Caco-2 (cell line): ENCODE measurements at regions of chr10 and their contacts with region 1.

Region 1: DNA sequence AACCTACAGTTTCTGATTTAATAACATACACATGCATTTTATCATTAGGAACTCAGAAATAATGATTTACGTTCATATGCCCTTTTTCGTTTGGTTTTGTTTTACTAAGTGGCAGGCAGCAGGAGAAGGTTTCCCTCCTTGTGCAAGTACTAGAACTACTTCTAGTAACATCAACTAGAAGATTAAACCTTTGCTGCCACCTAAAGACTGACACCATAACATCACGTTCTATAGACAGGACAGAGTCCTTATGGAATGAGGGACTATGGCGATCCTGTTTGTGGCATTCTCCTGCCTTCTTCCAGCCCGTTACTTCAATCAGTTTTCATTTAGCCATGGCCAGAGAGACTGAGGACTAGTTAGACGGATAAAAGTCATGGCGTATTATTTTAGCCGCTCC is 53.2 kb downstream of the GAD2 start:
- DNase-seq: peak in 1 of 2 experiments; percentile 65
- H3K4me3 ChIP-seq: no peak overlapping the region
- H3K4me3 Mint-ChIP-seq: no peak overlapping the region
- H3K27ac Mint-ChIP-seq: no peak overlapping the region
- H3K4me1 ChIP-seq: no peaks in the 10 kb centered on the region
- H3K4me1 Mint-ChIP-seq: peaks cover 6% of the 10 kb centered on the region
- H3K27me3 ChIP-seq: no peaks in the 10 kb centered on the region
- H3K27me3 Mint-ChIP-seq: peaks cover 8% of the 10 kb centered on the region
- CTCF ChIP-seq: peak; percentile 51 to 58

Region 2: DNA sequence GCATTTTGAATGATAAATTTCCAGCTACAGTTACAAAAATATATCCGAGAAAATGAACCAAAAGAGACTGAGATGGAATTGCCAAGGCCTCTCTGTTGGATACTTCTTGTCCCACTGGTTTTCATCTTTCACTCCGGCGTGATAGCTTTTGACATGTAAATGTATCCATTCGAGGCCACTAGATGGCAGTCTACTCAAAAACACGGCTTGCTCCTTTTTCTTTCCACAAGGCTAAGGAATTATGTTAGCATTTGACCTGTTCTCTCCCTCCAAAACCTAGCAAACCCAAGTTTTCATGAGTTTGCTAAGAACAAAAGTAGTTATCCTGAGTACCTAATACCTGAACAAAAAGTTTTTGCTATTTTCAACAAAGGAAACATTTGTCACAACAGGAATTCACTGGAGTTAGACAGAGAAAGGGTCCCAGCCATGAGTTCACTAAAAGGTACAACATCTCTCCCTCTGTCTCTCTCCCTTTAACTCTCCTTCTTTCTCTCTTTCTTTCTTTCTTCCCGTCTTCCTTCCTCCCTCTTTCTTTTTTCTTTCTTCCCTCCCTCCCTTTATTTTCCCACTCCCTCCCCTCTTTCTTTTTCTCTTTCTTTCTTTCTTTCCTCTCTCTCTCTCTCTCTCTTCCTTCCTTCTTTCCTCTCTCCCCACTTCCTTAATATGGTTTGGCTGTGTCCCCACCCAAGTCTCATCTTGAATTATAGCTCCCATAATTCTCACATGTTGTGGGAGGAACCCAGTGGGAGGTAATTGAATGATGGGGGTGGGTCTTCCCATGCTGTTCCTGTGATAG is 543.6 kb before region 1 on chr10:
- CTCF ChIA-PET with region 1: interaction called, 5 read pairs
- POLR2A ChIA-PET with region 1: no interaction called
- intact Hi-C with region 1: loop called (anchors 1 kb)
- DNase-seq: peak; percentile 51 to 62
- H3K4me3 ChIP-seq: no peak overlapping the region
- H3K4me3 Mint-ChIP-seq: no peak overlapping the region
- H3K27ac Mint-ChIP-seq: no peak overlapping the region
- H3K4me1 ChIP-seq: no peaks in the 10 kb centered on the region
- H3K4me1 Mint-ChIP-seq: no peaks in the 10 kb centered on the region
- H3K27me3 ChIP-seq: no peaks in the 10 kb centered on the region
- H3K27me3 Mint-ChIP-seq: peaks cover 5% of the 10 kb centered on the region
- CTCF ChIP-seq: peak; percentile 78

Region 3: DNA sequence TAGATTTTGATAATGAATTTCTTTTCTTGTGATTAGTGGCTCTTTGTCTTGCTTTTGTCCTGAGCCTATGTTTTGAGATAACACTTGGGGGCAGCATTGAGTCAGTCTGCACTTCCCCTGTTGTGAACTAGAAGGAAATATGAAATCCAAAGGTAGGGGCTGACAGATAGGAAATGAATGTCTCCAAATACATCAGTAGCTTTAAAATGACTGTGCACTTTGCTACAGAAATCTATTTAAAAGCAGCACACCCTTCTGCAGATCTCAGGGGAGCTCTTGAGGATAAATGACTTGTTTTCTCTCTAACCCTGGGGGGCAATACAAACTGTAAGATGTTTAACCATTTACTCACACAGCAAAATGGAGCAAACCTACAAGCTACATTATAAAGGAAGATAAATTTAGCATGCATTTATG is 511.7 kb before region 1 on chr10:
- CTCF ChIA-PET with region 1: no interaction called
- POLR2A ChIA-PET with region 1: no interaction called
- intact Hi-C with region 1: loop called (anchors 1 kb)
- DNase-seq: peak; percentile 42 to 52
- H3K4me3 ChIP-seq: no peak overlapping the region
- H3K4me3 Mint-ChIP-seq: no peak overlapping the region
- H3K27ac Mint-ChIP-seq: no peak overlapping the region
- H3K4me1 ChIP-seq: no peaks in the 10 kb centered on the region
- H3K4me1 Mint-ChIP-seq: no peaks in the 10 kb centered on the region
- H3K27me3 ChIP-seq: no peaks in the 10 kb centered on the region
- H3K27me3 Mint-ChIP-seq: peaks cover 2% of the 10 kb centered on the region
- CTCF ChIP-seq: peak; percentile 65 to 72

Region 4: DNA sequence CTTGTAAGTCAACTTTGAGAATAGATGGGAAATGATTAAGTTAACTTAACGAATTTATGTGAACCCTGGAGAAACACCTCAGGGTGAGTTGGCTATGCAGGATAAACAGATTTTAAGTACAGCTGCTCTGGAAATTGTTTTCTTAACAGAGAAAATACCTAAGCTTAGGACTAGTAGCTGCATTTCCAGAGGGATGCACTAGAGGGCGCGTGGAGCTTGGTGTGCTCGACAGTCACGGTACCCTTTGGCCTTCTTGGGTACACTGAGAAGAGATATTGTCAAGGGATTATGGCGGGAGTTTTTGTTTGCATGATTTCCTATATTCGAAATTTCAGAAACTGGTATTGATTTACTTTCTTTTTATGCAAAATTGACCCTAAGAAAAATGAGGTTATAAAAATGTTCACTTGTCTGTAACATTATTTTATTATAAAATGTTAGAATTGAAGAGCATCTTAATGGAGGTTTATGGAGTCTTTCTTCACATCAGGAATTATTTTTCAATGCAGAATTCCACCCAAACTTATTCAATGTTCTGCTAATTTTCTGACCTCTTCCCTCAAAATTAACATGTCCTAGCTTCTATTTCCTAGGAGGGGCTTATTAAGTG is 394.1 kb before region 1 on chr10:
- CTCF ChIA-PET with region 1: interaction called, 24 read pairs
- POLR2A ChIA-PET with region 1: no interaction called
- intact Hi-C with region 1: loop called (anchors 1 kb)
- DNase-seq: peak; percentile 79 to 83
- H3K4me3 ChIP-seq: no peak overlapping the region
- H3K4me3 Mint-ChIP-seq: no peak overlapping the region
- H3K27ac Mint-ChIP-seq: no peak overlapping the region
- H3K4me1 ChIP-seq: no peaks in the 10 kb centered on the region
- H3K4me1 Mint-ChIP-seq: no peaks in the 10 kb centered on the region
- H3K27me3 ChIP-seq: no peaks in the 10 kb centered on the region
- H3K27me3 Mint-ChIP-seq: peaks cover 4% of the 10 kb centered on the region
- CTCF ChIP-seq: peak; percentile 93 to 97

Region 5: GRCh38 chr10:26172131-26172530 is 97.6 kb before region 1 on chr10:
- CTCF ChIA-PET with region 1: no interaction called
- POLR2A ChIA-PET with region 1: no interaction called
- intact Hi-C with region 1: loop called (anchors 1 kb)
- DNase-seq: peak in 1 of 2 experiments; percentile 9
- H3K4me3 ChIP-seq: no peak overlapping the region
- H3K4me3 Mint-ChIP-seq: no peak overlapping the region
- H3K27ac Mint-ChIP-seq: no peak overlapping the region
- H3K4me1 ChIP-seq: no peaks in the 10 kb centered on the region
- H3K4me1 Mint-ChIP-seq: no peaks in the 10 kb centered on the region
- H3K27me3 ChIP-seq: peaks cover 1% of the 10 kb centered on the region; the same call in 1 of the 2 replicates
- H3K27me3 Mint-ChIP-seq: peaks cover 18% of the 10 kb centered on the region
- CTCF ChIP-seq: no peak

Region 6: DNA sequence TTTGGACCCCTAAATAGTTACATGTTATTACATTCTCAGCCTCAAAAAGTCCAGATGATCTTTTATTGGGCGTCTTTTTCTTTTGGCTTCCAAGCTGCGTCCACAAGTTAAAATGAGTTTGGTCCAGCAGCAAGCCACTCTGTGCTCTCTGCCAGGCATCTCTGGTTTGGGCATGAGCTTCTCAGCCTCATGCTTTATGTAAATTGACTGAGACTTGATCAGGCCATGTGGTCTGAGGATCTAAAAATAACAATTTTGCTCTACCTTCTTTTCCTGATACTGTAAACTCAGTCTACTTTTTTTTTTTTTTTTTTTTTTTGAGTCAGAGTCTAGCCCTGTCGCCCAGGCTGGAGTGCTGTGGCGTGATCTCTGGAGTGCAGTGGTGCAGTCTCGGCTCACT is 37.6 kb before region 1 on chr10:
- CTCF ChIA-PET with region 1: no interaction called
- POLR2A ChIA-PET with region 1: no interaction called
- intact Hi-C with region 1: loop called (anchors 2 kb)
- DNase-seq: no peak
- H3K4me3 ChIP-seq: no peak overlapping the region
- H3K4me3 Mint-ChIP-seq: no peak overlapping the region
- H3K27ac Mint-ChIP-seq: no peak overlapping the region
- H3K4me1 ChIP-seq: no peaks in the 10 kb centered on the region
- H3K4me1 Mint-ChIP-seq: no peaks in the 10 kb centered on the region
- H3K27me3 ChIP-seq: no peaks in the 10 kb centered on the region
- H3K27me3 Mint-ChIP-seq: peaks cover 18% of the 10 kb centered on the region
- CTCF ChIP-seq: no peak

Region 7: DNA sequence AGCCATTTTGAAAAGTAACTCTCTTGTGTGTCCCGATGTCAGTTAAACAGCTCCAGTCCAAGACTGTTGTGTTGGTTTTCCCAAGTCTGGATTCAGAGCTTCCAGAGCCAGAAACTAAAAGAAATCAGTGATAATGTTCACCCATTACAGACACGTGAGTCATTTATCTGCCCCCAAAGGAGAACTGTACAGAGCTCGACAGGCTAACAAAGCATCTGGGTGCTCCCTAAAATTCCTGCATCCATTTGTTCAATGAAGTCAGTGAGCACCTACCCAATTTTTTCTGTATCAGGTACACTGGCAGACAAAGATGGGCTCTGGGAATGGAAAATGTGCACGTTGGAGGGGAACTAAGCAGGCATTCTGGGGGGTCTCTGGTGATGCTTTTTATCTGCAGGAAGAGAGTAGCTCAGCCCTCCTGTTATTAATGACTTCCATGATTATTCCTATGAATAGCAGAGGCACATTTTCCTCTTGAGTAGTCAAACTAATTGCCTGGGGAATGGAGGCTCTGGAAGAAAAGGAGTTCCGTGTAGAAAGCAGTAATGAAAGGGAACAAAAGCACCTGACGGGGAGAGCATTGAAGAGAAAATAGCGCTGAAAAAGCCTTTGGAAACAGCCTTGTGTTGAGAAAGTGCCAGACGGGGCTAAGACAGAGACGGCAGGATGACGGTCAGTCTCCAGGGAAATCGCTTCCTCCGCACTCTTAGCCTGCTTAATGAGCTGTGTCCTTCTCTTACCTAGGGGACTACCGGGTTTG is 22.1 kb after region 1 on chr10:
- CTCF ChIA-PET with region 1: no interaction called
- POLR2A ChIA-PET with region 1: no interaction called
- intact Hi-C with region 1: no loop called
- DNase-seq: no peak
- H3K4me3 ChIP-seq: no peak overlapping the region
- H3K4me3 Mint-ChIP-seq: no peak overlapping the region
- H3K27ac Mint-ChIP-seq: no peak overlapping the region
- H3K4me1 ChIP-seq: no peaks in the 10 kb centered on the region
- H3K4me1 Mint-ChIP-seq: peaks cover 6% of the 10 kb centered on the region
- H3K27me3 ChIP-seq: no peaks in the 10 kb centered on the region
- H3K27me3 Mint-ChIP-seq: peaks cover 12% of the 10 kb centered on the region
- CTCF ChIP-seq: no peak

Region 8: DNA sequence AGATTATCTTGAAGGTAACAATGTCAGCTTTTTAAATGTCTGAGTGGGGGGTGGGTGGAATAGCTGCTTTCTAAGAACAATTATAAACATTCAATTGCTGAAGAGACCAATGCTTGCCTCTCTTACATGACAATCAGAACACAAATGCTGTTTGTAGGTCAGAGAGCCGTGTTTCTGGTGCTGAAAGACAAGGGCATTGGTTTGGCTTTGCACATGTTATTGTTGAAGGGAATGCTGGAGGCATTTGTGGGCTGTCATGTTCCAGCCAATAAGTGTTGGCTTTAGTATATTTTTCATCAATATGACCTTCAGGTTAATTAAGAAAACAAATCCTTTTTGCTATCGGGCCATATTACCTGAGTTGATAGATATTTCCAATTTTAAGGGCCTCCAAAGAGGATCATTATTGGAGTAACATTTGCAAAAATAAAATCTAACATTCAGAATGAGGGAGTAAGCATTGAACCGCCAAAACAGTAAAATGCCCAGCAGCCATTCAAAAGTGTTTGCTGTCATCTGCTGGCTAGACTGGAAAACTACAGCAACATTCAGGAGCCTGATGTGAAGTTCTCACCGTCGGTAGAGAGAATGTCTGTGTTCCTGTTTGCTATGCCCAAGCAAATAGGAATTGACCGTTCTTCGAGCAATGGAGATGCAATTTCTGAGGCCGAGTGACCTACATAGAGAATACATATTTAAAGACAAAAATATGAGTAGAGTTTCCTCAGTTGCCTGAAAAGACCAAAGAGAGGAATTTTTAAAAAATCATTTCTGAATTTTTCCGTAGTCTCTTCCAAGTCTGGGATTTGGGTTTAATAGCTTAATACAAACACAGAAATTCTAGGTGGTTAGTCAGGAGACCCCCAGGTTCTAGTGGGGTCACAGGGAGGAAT is 287.2 kb after region 1 on chr10:
- CTCF ChIA-PET with region 1: no interaction called
- POLR2A ChIA-PET with region 1: no interaction called
- intact Hi-C with region 1: loop called (anchors 2 kb)
- DNase-seq: peak in 1 of 2 experiments; percentile 73
- H3K4me3 ChIP-seq: no peak overlapping the region
- H3K4me3 Mint-ChIP-seq: no peak overlapping the region
- H3K27ac Mint-ChIP-seq: no peak overlapping the region
- H3K4me1 ChIP-seq: peaks cover 17% of the 10 kb centered on the region
- H3K4me1 Mint-ChIP-seq: peaks cover 13% of the 10 kb centered on the region
- H3K27me3 ChIP-seq: no peaks in the 10 kb centered on the region
- H3K27me3 Mint-ChIP-seq: no peaks in the 10 kb centered on the region
- CTCF ChIP-seq: peak; percentile 96 to 99